Activated T-helper 2 cell treated with anti-CD3 and anti-CD28 coated beads, Interferon-gamma antibody, Interleukin-2, Interleukin-4, amounts not matched to agents 10 μg/mL and 5 μg/mL and 100 μg/mL, durations not matched to agents 14 hours and 24 hours and 36 hours (primary cell): ENCODE measurements at regions of chr18 and their contacts with region 1.

Region 1: GRCh38 chr18:21740724-21741510 is at the start of gene MIB1:
- DNase-seq: peak; percentile 36
- H3K4me3 Mint-ChIP-seq: peak within 1 kb of the TSS; percentile 96
- H3K27ac Mint-ChIP-seq: peak within 1 kb of the TSS; percentile 97
- H3K4me1 Mint-ChIP-seq: peaks cover 35% of the 10 kb centered on the region
- H3K27me3 Mint-ChIP-seq: no peaks in the 10 kb centered on the region
- total RNA-seq, gene MIB1: 45.0 and 45.7 TPM in 2 replicates

Region 2: DNA sequence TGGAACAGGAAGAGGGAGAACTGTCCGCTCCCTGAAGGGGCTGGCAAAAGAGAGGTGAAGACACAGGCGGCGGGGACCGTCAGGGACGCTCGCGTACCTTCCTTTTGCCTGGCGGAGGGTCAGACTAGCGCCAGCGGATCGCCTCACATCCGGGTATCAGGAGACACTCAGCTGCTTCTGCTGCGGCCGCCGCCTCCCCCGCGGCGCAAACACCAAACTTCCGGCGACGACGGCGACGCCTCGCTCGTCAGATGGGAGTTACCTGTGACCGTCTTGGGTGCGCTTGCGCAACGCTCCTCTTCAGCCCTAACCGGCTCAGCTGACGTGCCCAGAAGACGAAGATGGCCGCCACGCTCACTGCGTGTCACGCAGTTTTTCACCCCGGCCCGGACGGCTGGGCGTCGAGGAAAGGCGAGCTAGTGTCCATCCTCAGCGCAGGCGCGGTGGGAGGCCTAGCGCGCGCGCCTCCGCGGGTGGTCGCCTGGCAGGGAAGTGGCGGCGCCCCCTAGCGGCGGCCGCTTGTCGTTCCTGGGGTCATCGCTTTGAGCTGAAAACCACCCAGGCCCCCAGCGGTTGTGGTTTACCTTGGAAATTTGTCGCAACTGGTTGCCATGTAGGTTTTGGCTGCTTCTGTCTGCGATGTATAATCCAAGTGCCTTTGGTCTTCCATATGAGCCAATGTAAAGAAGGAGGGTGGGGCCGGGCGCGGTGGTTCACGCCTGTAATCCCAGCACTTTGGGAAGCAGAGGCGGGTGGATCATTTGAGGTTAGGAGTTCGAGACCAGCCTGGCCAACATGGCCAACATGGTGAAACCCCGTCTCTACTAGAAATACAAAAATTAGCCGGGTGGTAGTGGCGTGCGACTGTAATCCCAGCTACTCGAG is 140.1 kb before region 1 on chr18 and contains the start of gene ESCO1:
- intact Hi-C with region 1: loop called (anchors 1 kb)
- DNase-seq: peak; percentile 95
- H3K4me3 Mint-ChIP-seq: peak within 1 kb of the TSS; percentile 98
- H3K27ac Mint-ChIP-seq: peak within 1 kb of the TSS; percentile 84
- H3K4me1 Mint-ChIP-seq: peaks cover 23% of the 10 kb centered on the region
- H3K27me3 Mint-ChIP-seq: peaks cover 3% of the 10 kb centered on the region
- total RNA-seq, gene ESCO1: 20.5 and 21.4 TPM in 2 replicates

Region 3: GRCh38 chr18:21682371-21683051 is 58.4 kb before region 1 on chr18:
- intact Hi-C with region 1: loop called (anchors 10 kb)
- DNase-seq: peak; percentile 14
- H3K4me3 Mint-ChIP-seq: no peak overlapping the region
- H3K27ac Mint-ChIP-seq: no peak overlapping the region
- H3K4me1 Mint-ChIP-seq: peaks cover 14% of the 10 kb centered on the region
- H3K27me3 Mint-ChIP-seq: no peaks in the 10 kb centered on the region

Region 4: GRCh38 chr18:21704603-21705364 is 36.1 kb before region 1 on chr18 and contains the start of gene ABHD3:
- intact Hi-C with region 1: loop called (anchors 1 kb)
- DNase-seq: peak; percentile 90
- H3K4me3 Mint-ChIP-seq: peak within 1 kb of the TSS; percentile 96
- H3K27ac Mint-ChIP-seq: peak within 1 kb of the TSS; percentile 89
- H3K4me1 Mint-ChIP-seq: peaks cover 21% of the 10 kb centered on the region
- H3K27me3 Mint-ChIP-seq: no peaks in the 10 kb centered on the region
- total RNA-seq, gene ABHD3: 29.6 and 31.2 TPM in 2 replicates